Left colon (tissue), 2 donors: ENCODE measurements at regions of chr18 and their contacts with region 1.

Region 1: GRCh38 chr18:26548429-26549262 is at the start of gene KCTD1:
- DNase-seq: peak; percentile 87
- ATAC-seq: peak; percentile 78
- total RNA-seq, gene KCTD1: 12.3 to 15.6 TPM

Region 2: GRCh38 chr18:26159353-26159752 is 389.3 kb before region 1 on chr18:
- intact Hi-C with region 1: no loop called
- DNase-seq: no peak
- ATAC-seq: no peak

Region 3: DNA sequence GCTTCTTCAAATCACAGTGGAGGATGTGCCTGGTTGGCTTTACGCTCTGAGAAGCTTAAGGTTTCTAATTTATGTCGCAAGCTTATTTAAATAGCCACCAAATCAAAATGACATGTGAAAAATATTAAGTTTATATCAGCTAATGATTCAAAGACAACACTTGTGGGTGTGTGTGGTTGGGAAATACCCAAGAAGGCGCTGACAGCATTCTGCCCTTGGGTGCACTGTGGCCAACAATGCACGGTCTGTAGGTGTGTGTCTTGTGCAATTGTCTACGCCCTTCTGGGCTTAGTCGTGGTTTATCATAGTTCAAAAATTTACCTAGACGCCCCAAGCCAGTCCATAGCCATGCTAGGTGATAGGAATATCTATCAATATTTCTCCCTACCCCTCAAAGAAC is 61.2 kb before region 1 on chr18:
- intact Hi-C with region 1: no loop called
- DNase-seq: no peak
- ATAC-seq: no peak

Region 4: DNA sequence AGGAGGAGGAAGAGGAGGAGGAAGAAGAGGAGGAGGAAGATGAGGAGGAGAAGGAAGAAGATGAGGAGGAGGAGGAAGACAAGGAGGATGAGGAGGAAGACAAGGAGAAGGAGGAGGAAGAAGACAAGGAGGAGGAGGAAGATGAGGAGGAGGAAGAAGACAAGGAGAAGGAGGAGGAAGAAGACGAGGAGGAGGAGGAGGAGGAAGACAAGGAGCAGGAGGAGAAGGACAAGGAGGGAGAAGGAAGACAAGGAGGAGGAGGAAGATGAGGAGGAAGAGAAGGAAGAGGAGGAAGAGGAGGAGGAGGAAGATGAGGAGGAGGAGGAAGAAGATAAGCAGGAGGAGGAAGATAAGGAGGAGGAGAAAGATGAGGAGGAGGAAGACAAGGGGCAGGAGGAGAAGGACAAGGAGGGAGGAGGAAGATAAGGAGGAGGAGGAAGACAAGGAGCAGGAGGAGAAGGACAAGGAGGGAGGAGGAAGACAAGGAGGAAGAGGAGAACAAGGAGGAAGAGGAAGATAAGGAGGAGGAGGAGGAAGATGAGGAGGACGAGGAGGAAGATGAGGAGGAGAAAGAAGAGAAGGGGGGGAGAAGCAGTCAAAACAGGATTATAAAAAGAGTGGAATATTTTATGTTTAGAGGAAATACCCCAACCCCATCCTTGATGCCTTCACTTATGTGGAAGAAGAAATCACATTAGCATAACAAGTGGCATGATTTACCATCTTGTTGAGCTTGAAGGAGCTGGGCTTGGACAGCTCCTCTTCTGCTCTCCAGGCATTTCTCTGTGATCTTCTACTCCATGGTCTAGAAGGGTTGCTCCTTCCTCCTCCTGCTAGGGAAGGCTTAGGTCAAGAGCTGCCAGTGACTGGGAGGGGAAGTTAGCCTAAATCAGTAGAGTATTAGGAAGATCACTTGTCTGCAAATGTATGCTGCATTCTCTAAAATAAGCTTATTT is 45.0 kb after region 1 on chr18:
- intact Hi-C with region 1: no loop called
- DNase-seq: no peak
- ATAC-seq: no peak

Region 5: GRCh38 chr18:26656944-26657536 is 108.4 kb after region 1 on chr18:
- intact Hi-C with region 1: loop called in 1 of 2 experiments (anchors 10 kb)
- DNase-seq: peak; percentile 65 to 79
- ATAC-seq: peak; percentile 78